ENCODE measurements at regions of chrX and their contacts with region 1.

Region 1: GRCh38 chrX:136209016-136209738 is 42.0 kb downstream of the MAP7D3 start:
- DNase-seq: peak; percentile 43 to 60
- ATAC-seq: peak; percentile 84 to 90; a peak in 5 of 6 replicates
- H3K4me3 ChIP-seq: no peak overlapping the region
- H3K27ac ChIP-seq: peak overlapping the region in 1 of 2 experiments; percentile 17; a peak in 1 of 6 replicates
- H3K4me1 ChIP-seq: peaks cover 9% of the 10 kb centered on the region
- CTCF ChIP-seq: peak; percentile 52
- EP300 ChIP-seq: no peak
- POLR2A ChIP-seq: no peak
- RAD21 ChIP-seq: peak; percentile 62 to 65

Region 2: DNA sequence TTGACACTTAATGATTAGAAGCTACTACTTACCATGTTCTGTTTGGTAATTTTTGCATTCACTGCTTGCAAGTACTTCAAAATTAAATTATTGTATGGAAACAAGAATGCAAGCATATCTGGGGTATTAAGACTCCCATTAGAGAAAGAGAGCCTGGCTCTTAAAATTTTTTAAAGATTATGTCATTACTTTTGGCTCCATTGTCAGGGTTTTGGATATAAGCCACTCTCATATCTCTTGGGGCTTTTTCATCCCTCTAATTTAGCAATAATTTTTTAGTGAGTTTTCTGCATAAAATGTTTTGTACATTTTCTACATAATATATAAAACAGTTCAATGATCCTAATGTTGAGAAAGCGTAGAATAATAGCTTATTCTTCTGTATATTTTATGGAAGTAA is 174.5 kb before region 1 on chrX:
- CTCF ChIA-PET with region 1: interaction called, 82 read pairs
- POLR2A ChIA-PET with region 1: no interaction called
- DNase-seq: no peak
- ATAC-seq: no peak
- H3K4me3 ChIP-seq: no peak overlapping the region
- H3K27ac ChIP-seq: no peak overlapping the region
- H3K4me1 ChIP-seq: no peaks in the 10 kb centered on the region
- CTCF ChIP-seq: no peak
- EP300 ChIP-seq: no peak
- POLR2A ChIP-seq: no peak
- RAD21 ChIP-seq: no peak

Region 3: DNA sequence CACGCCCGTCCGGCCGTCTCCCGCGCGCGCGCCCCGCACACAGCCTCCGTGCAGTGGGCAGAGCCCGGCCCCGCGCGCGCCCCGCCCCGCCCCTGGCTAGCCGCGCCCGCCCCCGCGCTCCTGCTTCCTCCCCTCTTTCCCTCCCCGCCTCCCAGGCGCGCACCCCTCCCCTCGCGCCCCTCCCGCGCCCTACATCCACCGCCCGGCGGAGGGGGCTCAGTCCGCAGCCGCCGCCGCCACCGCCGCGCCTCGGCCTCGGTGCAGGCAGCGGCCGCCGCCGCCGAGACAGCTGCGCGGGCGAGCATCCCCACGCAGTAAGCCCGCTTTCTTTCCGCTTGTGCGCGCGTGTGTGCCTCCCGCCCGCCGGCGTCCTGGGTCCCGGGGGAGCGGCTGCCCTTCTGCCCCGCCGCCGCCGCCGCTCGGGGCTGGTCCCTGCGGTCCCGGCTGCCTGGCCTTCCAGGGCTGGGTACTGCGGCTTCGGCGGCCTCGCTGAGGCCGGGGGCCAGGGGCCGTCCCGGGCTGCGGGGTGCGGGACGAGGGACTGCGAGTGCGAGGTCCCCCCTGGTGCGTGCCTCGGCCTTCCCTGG is 61.8 kb before region 1 on chrX and contains the start of gene FHL1:
- CTCF ChIA-PET with region 1: no interaction called
- POLR2A ChIA-PET with region 1: no interaction called
- DNase-seq: peak in 1 of 2 experiments; percentile 18
- ATAC-seq: peak; percentile 78 to 82
- H3K4me3 ChIP-seq: peak within 1 kb of the TSS; percentile 93
- H3K27ac ChIP-seq: peak within 1 kb of the TSS; percentile 87 to 98
- H3K4me1 ChIP-seq: no peaks in the 10 kb centered on the region; the same call in 1 of the 3 replicates
- CTCF ChIP-seq: no peak
- EP300 ChIP-seq: no peak
- POLR2A ChIP-seq: no peak
- RAD21 ChIP-seq: no peak
- polyA plus RNA-seq, gene FHL1: 32.2 and 38.5 TPM in 2 replicates

Region 4: DNA sequence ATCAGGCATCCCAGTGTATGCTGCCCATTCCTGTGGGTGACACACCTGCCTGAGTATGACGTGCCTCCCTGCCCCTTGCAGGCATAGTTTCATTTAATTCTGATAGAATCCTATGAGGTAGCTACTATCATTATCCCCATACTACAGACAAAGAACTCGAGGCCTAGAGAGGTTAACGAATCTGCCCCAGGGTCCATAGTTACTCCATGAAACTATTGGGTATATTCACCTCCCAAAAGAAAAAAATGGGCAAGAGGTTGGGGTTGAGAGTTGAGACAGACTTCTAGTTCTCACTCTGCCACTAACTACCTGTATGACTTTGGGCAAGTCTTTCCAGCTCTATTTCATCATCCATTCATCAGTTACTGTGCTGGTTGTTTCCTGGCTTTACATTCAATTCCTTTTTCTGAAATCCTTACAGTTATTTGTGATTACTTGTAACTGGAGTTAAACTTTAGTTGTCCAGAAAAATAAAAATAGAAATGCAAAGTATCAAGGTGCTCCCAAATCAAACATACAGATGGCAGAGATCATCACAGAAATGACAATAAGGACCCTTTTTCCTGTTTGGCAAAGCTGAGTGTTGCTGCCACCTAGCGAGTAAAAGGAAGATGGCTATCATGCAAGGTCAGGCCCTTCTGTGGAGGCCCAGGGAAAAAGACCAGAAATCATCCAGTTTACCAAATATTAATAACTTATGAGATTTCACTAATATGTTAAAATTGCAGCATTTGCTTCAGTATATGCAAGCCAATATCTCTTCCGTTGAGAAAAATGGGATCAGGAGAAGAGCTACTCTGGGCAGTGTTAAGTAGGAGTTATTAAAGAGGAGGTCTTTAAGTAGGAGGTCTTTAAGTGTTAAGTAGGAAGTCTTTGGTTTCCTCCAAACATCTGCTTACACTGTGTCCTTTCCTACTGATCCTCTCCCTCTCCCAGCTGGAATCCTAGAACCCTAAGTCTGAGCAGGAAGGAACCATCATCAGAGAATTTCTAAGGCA is 59.2 kb after region 1 on chrX:
- CTCF ChIA-PET with region 1: interaction called, 12 read pairs
- POLR2A ChIA-PET with region 1: no interaction called
- DNase-seq: peak; percentile 15 to 52
- ATAC-seq: peak; percentile 80 to 86; a peak in 5 of 6 replicates
- H3K4me3 ChIP-seq: no peak overlapping the region
- H3K27ac ChIP-seq: no peak overlapping the region
- H3K4me1 ChIP-seq: no peaks in the 10 kb centered on the region
- CTCF ChIP-seq: peak; percentile 68
- EP300 ChIP-seq: no peak
- POLR2A ChIP-seq: no peak
- RAD21 ChIP-seq: peak; percentile 67 to 74